ENCODE measurements at regions of chr11 and their contacts with region 1.

Region 1: DNA sequence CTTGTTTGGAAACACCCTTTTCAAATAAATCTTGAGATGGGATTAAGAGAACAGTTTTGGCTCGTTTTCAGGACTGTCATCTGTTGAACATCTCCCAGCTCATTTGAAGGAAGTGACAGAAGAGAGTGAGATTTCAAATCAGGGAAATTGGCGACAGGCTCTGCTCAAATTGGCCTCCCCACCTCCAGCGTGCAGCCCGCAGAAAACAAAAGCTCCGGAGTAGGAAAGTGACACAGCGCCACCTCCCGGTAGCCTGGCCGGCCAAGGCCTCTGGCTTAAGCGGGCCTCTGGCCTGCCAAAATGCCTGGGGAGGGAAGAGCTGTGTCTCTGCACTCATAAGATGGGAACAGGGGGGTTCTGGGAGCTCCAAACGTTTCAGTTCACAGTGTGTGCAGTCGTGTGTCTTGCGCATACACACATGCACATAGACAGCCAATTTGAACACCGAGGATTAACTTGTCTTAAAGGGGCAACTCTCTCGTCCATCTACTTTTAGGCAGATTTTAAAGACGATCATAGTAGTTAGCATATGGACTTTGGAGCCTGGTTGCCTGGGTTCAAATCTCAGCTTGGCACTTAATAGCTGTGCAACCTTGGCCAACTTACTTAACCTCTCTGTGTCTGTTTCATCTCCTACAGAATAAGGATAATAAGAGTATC is 132.7 kb upstream of the RCN1 start:
- DNase-seq: peak; percentile 9
- ATAC-seq: peak; percentile 98
- H3K4me3 ChIP-seq: no peak overlapping the region
- H3K27ac ChIP-seq: no peak overlapping the region
- H3K4me1 ChIP-seq: no peaks in the 10 kb centered on the region
- H3K27me3 ChIP-seq: no peaks in the 10 kb centered on the region
- CTCF ChIP-seq: peak; percentile 88 to 91 (median 91)
- EP300 ChIP-seq: no peak
- POLR2A ChIP-seq: no peak
- RAD21 ChIP-seq: peak; percentile 91

Region 2: GRCh38 chr11:31340903-31341572 is 617.2 kb before region 1 on chr11:
- CTCF ChIA-PET with region 1: interaction called, 33 read pairs
- POLR2A ChIA-PET with region 1: no interaction called
- RAD21 ChIA-PET with region 1: interaction called, 7 read pairs
- SMC1A ChIA-PET with region 1: interaction called, 7 read pairs
- in situ Hi-C with region 1: no loop called
- intact Hi-C with region 1: loop called (anchors 1 kb)
- DNase-seq: no peak
- ATAC-seq: peak; percentile 69
- H3K4me3 ChIP-seq: no peak overlapping the region
- H3K27ac ChIP-seq: no peak overlapping the region
- H3K4me1 ChIP-seq: no peaks in the 10 kb centered on the region
- H3K27me3 ChIP-seq: no peaks in the 10 kb centered on the region
- CTCF ChIP-seq: peak; percentile 46 to 71 (median 70); a peak in 5 of 6 replicates
- EP300 ChIP-seq: no peak
- POLR2A ChIP-seq: no peak
- RAD21 ChIP-seq: peak; percentile 55

Region 3: DNA sequence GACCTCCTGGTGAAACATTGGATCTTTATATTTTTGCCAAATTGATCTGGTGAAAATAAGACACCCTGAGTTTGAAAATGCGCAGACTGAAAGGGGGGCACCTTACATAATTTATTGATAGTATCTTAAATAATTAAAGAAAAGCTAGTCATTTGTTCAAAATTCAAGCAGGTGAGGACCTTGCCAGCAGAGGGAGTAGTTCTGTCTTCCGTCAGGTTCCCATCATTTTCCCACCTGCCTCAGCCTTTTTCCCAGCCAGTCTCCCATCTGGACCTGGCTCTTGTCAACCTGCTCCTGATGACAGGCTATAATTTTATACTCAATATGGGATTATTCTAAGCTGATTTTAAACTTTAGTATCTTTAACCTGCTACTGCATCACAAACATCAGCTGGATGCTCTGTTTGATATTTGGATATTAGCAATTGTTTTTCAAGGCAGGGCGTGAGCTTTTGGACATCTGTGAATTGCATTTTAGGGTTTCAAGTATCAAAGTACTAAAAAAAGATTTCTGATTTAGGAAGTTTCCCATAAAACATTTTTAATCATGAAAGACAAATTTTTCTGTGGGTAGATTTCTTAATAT is 316.6 kb before region 1 on chr11:
- CTCF ChIA-PET with region 1: interaction called, 112 read pairs
- POLR2A ChIA-PET with region 1: no interaction called
- RAD21 ChIA-PET with region 1: interaction called, 67 read pairs
- SMC1A ChIA-PET with region 1: interaction called, 70 read pairs
- in situ Hi-C with region 1: loop called (anchors 5 kb)
- intact Hi-C with region 1: loop called (anchors 1 kb)
- DNase-seq: no peak
- ATAC-seq: no peak
- H3K4me3 ChIP-seq: no peak overlapping the region
- H3K27ac ChIP-seq: no peak overlapping the region
- H3K4me1 ChIP-seq: no peaks in the 10 kb centered on the region
- H3K27me3 ChIP-seq: no peaks in the 10 kb centered on the region
- CTCF ChIP-seq: peak; percentile 54 to 61 (median 56)
- EP300 ChIP-seq: no peak
- POLR2A ChIP-seq: no peak
- RAD21 ChIP-seq: peak; percentile 32

Region 4: GRCh38 chr11:31824879-31825837 is 133.0 kb before region 1 on chr11:
- CTCF ChIA-PET with region 1: no interaction called
- POLR2A ChIA-PET with region 1: no interaction called
- RAD21 ChIA-PET with region 1: no interaction called
- SMC1A ChIA-PET with region 1: no interaction called
- in situ Hi-C with region 1: no loop called
- intact Hi-C with region 1: no loop called
- DNase-seq: no peak
- ATAC-seq: no peak
- H3K4me3 ChIP-seq: no peak overlapping the region
- H3K27ac ChIP-seq: no peak overlapping the region
- H3K4me1 ChIP-seq: no peaks in the 10 kb centered on the region
- H3K27me3 ChIP-seq: peaks cover 19 to 24% of the 10 kb centered on the region in 2 experiments
- CTCF ChIP-seq: no peak
- EP300 ChIP-seq: no peak
- POLR2A ChIP-seq: no peak
- RAD21 ChIP-seq: no peak

Region 5: GRCh38 chr11:31926816-31927528 is 31.2 kb before region 1 on chr11:
- CTCF ChIA-PET with region 1: interaction called, 14 read pairs
- POLR2A ChIA-PET with region 1: no interaction called
- RAD21 ChIA-PET with region 1: no interaction called
- SMC1A ChIA-PET with region 1: interaction called, 7 read pairs
- in situ Hi-C with region 1: no loop called
- intact Hi-C with region 1: no loop called
- DNase-seq: no peak
- ATAC-seq: no peak
- H3K4me3 ChIP-seq: no peak overlapping the region
- H3K27ac ChIP-seq: no peak overlapping the region
- H3K4me1 ChIP-seq: no peaks in the 10 kb centered on the region; the same call in 1 of the 2 replicates
- H3K27me3 ChIP-seq: peaks cover 0 to 7% of the 10 kb centered on the region in 2 experiments; a peak in 1 of 4 replicates
- CTCF ChIP-seq: no peak
- EP300 ChIP-seq: no peak
- POLR2A ChIP-seq: no peak
- RAD21 ChIP-seq: no peak

Region 6: GRCh38 chr11:31974366-31975136 is 16.3 kb after region 1 on chr11:
- CTCF ChIA-PET with region 1: interaction called, 19 read pairs
- POLR2A ChIA-PET with region 1: no interaction called
- RAD21 ChIA-PET with region 1: interaction called, 10 read pairs
- SMC1A ChIA-PET with region 1: interaction called, 17 read pairs
- in situ Hi-C with region 1: no loop called
- intact Hi-C with region 1: no loop called
- DNase-seq: no peak
- ATAC-seq: no peak
- H3K4me3 ChIP-seq: no peak overlapping the region
- H3K27ac ChIP-seq: no peak overlapping the region
- H3K4me1 ChIP-seq: no peaks in the 10 kb centered on the region
- H3K27me3 ChIP-seq: peaks cover 0 to 2% of the 10 kb centered on the region in 2 experiments; a peak in 1 of 4 replicates
- CTCF ChIP-seq: no peak
- EP300 ChIP-seq: no peak
- POLR2A ChIP-seq: no peak
- RAD21 ChIP-seq: no peak

Region 7: DNA sequence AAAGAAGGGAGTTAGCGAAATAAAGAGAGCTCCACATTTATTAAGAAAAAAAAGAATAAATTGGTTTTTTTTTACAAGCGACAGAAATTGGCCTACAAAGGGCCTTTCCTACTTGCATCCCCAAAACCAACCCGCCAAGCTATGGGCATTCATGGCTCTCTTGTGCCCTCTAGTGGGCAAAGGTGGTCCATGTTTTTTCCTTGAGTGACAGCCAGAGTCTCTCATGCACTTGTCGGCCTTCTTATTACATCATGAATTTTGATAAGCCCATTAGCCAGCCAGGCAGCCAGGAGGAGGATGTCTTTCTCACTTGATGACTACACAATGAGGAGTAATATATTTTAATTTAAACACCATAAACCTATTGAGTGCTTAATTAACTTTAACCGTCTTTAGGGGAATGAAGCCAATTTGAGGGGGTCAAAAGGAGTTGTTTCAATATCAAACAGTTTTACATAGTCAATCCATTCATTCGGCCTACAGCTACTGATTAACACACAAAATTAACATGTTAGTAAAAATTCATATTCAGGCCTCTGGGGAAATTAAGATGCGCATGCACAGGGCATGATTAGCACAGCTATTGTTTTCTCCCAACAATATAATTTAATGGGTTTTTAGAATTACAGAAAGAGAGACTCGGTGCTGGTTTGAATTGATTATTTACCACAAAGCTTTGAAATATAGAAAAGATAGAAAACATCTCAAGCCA is 218.2 kb after region 1 on chr11:
- CTCF ChIA-PET with region 1: interaction called, 26 read pairs
- POLR2A ChIA-PET with region 1: no interaction called
- RAD21 ChIA-PET with region 1: interaction called, 12 read pairs
- SMC1A ChIA-PET with region 1: interaction called, 13 read pairs
- in situ Hi-C with region 1: no loop called
- intact Hi-C with region 1: loop called (anchors 5 kb)
- DNase-seq: peak; percentile 64
- ATAC-seq: peak; percentile 88
- H3K4me3 ChIP-seq: no peak overlapping the region
- H3K27ac ChIP-seq: no peak overlapping the region
- H3K4me1 ChIP-seq: no peaks in the 10 kb centered on the region; the same call in 1 of the 2 replicates
- H3K27me3 ChIP-seq: no peaks in the 10 kb centered on the region
- CTCF ChIP-seq: peak; percentile 74 to 96 (median 77)
- EP300 ChIP-seq: no peak
- POLR2A ChIP-seq: no peak
- RAD21 ChIP-seq: peak; percentile 99